GM12878 (cell line): ENCODE measurements at regions of chr12 and their contacts with region 1.

Region 1: DNA sequence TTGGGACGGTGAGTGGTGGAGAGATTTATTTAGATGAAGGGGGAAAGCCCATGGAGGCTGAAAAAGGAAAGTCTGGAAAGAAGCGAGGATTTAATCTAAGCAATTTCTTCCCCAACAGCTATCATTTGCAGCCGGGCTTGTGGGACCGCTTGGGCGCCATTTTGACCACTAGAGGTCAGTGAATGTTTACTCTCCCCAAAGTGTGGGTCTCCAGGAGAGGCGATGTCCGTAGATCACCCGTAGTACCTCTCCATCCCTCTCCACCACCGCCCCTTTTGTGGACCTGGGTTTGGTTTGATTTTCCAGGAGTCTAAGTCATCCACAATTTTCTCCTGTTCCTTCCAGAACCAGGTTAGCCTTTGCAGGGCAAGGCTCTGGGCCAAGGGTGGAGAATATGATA is 91.2 kb upstream of the PARP11 start:
- DNase-seq: no peak
- ATAC-seq: peak; percentile 91
- H3K4me3 ChIP-seq: no peak overlapping the region
- H3K27ac ChIP-seq: no peak overlapping the region
- H3K4me1 ChIP-seq: no peaks in the 10 kb centered on the region
- H3K27me3 ChIP-seq: peaks cover 0 to 3% of the 10 kb centered on the region in 2 experiments; a peak in 3 of 4 replicates
- CTCF ChIP-seq: peak; percentile 56 to 69 (median 57)
- EP300 ChIP-seq: no peak
- POLR2A ChIP-seq: no peak
- RAD21 ChIP-seq: peak; percentile 42; the same call in 1 of the 2 replicates

Region 2: GRCh38 chr12:3480764-3481163 is 483.7 kb before region 1 on chr12:
- CTCF ChIA-PET with region 1: no interaction called
- POLR2A ChIA-PET with region 1: no interaction called
- RAD21 ChIA-PET with region 1: no interaction called
- SMC1A ChIA-PET with region 1: no interaction called
- in situ Hi-C with region 1: no loop called
- intact Hi-C with region 1: no loop called
- DNase-seq: no peak
- ATAC-seq: no peak
- H3K4me3 ChIP-seq: no peak overlapping the region
- H3K27ac ChIP-seq: no peak overlapping the region
- H3K4me1 ChIP-seq: no peaks in the 10 kb centered on the region
- H3K27me3 ChIP-seq: no peaks in the 10 kb centered on the region; a peak in 2 of 4 replicates
- CTCF ChIP-seq: no peak
- EP300 ChIP-seq: no peak
- POLR2A ChIP-seq: no peak
- RAD21 ChIP-seq: no peak

Region 3: DNA sequence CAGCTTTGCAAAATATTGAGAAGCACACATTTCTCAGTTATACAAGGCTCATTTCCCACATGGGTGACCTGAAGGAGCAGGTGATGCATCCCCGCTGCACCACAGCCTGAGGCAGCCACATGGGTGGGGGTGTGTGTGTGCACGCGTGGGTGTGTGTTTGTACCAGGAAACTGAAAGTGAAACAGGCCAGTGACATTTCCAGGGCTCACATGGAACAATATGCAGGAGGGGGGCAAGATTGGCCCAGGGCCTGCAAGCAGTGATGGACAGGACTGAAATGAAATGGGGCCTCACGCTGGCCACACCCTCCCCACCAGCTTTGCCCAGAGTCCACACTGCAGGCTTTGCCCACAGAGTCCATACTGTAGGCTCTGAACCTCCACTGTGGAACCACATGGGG is 63.0 kb after region 1 on chr12:
- CTCF ChIA-PET with region 1: no interaction called
- POLR2A ChIA-PET with region 1: no interaction called
- RAD21 ChIA-PET with region 1: no interaction called
- SMC1A ChIA-PET with region 1: no interaction called
- in situ Hi-C with region 1: no loop called
- intact Hi-C with region 1: no loop called
- DNase-seq: no peak
- ATAC-seq: peak; percentile 21; the same call in 2 of the 3 replicates
- H3K4me3 ChIP-seq: no peak overlapping the region
- H3K27ac ChIP-seq: no peak overlapping the region
- H3K4me1 ChIP-seq: no peaks in the 10 kb centered on the region
- H3K27me3 ChIP-seq: peaks cover 3 to 9% of the 10 kb centered on the region in 2 experiments
- CTCF ChIP-seq: no peak
- EP300 ChIP-seq: no peak
- POLR2A ChIP-seq: no peak
- RAD21 ChIP-seq: no peak

Region 4: DNA sequence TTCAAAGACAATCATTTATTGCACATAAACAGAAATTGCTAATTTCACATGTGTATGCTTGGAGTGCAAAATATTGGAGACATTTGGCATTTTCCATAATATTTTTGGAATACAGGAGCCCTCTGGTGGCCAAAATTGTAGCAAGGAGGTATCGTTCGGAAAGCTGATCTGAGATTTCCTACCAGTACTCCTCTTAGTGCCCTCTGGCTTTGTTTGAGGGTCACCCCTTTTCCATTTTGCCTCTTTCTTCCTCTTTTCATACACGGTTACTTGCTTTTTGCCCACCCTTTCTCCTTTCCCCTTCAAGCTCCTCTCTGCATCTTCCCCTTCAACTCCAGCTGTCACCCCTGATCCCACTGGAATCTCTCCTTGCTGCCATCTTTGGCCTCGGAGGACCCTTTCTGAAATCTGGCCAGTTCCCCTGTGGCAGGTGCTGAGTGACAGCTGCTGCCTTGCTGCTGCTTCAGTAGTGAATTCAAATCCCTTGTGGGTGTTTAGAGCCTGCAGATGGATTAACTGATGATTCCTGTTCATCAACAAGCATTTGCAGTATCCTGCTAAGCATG is 73.4 kb after region 1 on chr12:
- CTCF ChIA-PET with region 1: interaction called, 10 read pairs
- POLR2A ChIA-PET with region 1: no interaction called
- RAD21 ChIA-PET with region 1: interaction called, 4 read pairs
- SMC1A ChIA-PET with region 1: interaction called, 3 read pairs
- in situ Hi-C with region 1: no loop called
- intact Hi-C with region 1: no loop called
- DNase-seq: no peak
- ATAC-seq: no peak
- H3K4me3 ChIP-seq: no peak overlapping the region
- H3K27ac ChIP-seq: no peak overlapping the region
- H3K4me1 ChIP-seq: no peaks in the 10 kb centered on the region
- H3K27me3 ChIP-seq: peaks cover 0 to 3% of the 10 kb centered on the region in 2 experiments; a peak in 2 of 4 replicates
- CTCF ChIP-seq: peak; percentile 12 to 40 (median 31); a peak in 3 of 6 replicates
- EP300 ChIP-seq: no peak
- POLR2A ChIP-seq: no peak
- RAD21 ChIP-seq: peak; percentile 46